ENCODE measurements at regions of chr3 and their contacts with region 1.

Region 1: GRCh38 chr3:194604834-194605233 is 28.4 kb downstream of the TMEM44 start:
- DNase-seq: no peak
- CTCF ChIP-seq: no peak

Region 2: DNA sequence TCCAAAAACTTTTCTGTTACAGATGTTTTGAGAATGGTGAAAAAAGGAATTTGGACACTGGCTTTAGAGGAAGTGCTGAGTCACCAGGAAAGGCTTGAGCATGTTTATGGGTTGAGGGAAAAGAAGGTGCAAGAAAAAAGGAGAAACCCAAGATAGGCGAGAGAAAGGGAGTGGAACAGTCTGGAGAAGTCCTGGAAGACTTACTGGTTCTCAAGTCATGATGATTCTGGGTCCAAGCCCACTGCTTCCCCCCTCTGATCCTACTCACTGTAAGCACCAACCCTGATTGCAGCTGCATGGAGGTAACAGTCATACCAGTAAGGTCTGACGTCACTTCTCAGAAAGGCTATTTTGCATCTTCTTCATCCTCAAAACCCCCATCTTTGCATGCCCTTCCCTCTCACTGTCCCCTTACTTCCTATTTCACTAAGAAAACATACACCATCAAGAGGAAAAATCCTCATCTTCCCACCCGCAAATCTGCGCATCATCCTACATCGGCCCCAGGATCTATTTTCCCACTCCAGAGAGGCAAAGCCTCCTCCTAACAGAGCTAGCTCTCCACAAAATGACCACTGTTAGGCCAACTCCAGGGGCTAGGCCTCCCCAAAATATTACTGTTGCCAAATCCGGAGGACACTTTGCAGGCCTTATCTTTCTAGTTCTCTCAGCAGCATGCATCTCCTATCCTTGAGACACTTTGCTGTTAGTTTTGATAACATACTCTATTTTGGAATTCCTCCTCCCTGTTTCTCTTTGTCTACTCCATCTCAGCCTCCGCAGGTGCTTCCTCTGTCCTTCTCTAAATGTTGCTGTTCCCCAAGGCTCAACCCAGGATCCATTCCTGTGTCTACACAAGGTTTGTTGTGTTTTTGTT is 114.9 kb before region 1 on chr3:
- CTCF ChIA-PET with region 1: no interaction called
- POLR2A ChIA-PET with region 1: no interaction called
- DNase-seq: peak; percentile 77
- CTCF ChIP-seq: no peak

Region 3: GRCh38 chr3:194592798-194593752 is 11.8 kb before region 1 on chr3:
- CTCF ChIA-PET with region 1: interaction called, 11 read pairs
- POLR2A ChIA-PET with region 1: no interaction called
- DNase-seq: no peak
- CTCF ChIP-seq: no peak